Heart right ventricle (tissue), 16 donors: ENCODE measurements at regions of chr3 and their contacts with region 1.

Region 1: GRCh38 chr3:52333869-52334557 is 17.9 kb downstream of the DNAH1 start:
- DNase-seq: no peak
- ATAC-seq: no peak
- H3K4me3 ChIP-seq: no peak overlapping the region
- H3K27ac ChIP-seq: no peak overlapping the region
- H3K4me1 ChIP-seq: no peaks in the 10 kb centered on the region
- H3K27me3 ChIP-seq: no peaks in the 10 kb centered on the region
- CTCF ChIP-seq: no peak

Region 2: GRCh38 chr3:52299879-52300611 is 34.0 kb before region 1 on chr3:
- intact Hi-C with region 1: loop called in 1 of 10 experiments (anchors 5 kb)
- DNase-seq: peak; percentile 47 to 72
- ATAC-seq: peak; percentile 80 to 96 (median 84)
- H3K4me3 ChIP-seq: peak overlapping the region in 1 of 10 donors; percentile 19
- H3K27ac ChIP-seq: peak overlapping the region in 8 of 10 donors; percentile 24 to 79 (median 66)
- H3K4me1 ChIP-seq: peaks cover 4 to 28% (median 19%) of the 10 kb centered on the region in 9 donors
- H3K27me3 ChIP-seq: no peaks in the 10 kb centered on the region
- CTCF ChIP-seq: peak in 4 of 9 donors; percentile 24 to 56 (median 48)

Region 3: DNA sequence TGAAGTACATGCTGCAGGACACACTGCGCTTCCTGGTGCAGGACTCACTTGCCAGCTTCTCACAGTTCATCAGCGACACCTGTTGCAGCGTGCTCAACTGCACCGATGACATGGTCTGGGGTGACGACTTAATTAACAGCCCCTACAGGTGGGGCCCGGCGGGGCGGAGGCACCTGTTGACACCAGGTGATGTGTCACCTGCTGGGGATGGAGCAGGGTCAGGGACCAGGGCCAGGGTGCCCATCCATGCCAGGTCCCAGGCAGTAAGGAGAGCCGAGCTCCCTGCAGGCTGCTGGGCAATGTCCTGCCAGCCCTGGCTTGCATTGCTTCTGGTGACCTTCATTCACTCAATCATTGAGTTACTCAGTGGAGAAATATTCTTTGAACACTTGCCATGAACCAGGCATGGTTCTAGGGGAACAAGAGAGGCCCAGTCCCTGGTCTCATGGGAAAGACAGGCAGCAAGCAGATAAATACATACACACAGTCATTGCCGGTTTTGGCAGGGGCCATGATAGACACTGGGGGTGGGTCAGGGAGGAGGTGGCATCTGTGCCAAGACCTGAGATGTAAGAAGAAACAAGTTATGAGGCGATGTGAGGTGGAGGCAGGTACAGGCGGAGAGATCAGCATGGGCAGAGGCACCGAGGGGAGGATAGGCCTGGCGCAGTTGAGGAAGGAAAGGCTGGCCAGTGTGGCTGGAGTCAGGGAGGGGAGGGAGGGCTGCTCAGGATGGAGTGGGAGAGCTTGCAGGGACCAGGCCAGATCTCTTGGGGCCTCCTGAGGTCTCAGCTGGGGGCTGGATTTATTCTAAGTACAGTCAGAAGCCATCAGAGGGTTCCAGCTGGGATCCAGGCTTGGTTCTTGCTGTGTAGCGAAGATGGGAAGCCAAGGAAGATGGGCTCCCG is 12.9 kb after region 1 on chr3:
- intact Hi-C with region 1: loop called in 1 of 10 experiments (anchors 1 kb)
- DNase-seq: peak; percentile 47 to 53
- ATAC-seq: peak; percentile 53 to 88 (median 80)
- H3K4me3 ChIP-seq: no peak overlapping the region
- H3K27ac ChIP-seq: peak overlapping the region in 6 of 10 donors; percentile 27 to 69 (median 51)
- H3K4me1 ChIP-seq: peaks cover 0 to 25% (median 7%) of the 10 kb centered on the region in 9 donors
- H3K27me3 ChIP-seq: no peaks in the 10 kb centered on the region
- CTCF ChIP-seq: no peak